ENCODE measurements at regions of chr14 and their contacts with region 1.

Region 1: DNA sequence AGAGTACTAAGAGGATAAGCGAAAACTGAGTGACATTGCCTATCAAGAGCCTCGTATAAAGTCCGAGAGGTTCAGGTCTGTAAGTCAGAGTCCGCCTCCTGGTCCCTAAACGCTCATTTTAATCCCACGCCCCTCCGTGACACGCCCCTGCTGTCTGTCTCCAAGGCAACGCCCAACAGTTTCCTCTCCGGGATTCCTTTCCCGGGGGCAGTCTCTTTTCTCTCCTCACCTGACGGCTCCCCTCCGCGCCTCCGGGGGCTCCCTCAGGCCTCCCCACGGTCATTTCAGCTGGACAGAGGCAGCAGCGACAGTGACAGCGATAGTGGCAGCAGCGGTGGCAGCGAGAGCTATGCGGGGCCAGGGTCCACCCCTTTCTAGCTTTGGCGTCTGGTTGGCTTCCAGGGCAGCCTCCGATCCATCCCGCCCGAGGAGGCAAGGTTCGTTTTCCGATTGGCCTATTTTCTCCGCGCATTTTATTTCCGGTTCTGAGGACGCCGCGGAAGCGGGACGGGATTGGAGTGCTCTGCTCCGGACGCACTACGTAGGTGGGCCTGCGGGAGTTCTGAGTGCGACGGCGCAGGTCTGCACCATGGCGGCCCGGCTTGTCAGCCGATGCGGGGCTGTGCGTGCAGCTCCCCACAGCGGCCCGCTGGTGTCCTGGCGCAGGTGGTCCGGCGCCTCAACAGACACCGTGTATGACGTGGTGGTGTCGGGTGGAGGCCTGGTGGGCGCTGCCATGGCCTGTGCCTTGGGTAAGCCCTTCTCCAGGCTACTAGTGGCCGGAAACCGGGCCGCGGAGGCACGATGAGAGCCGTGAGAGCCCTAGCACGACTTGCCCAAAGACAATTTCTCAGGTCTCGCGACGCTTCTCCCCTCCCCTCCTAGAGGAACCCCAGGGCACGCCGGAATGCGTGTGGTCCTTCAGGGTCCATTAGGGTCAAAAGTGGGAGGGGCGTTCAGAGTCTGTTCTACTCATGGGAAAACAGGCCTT is at the starts of genes COQ6 and FAM161B:
- DNase-seq: peak; percentile 95
- H3K4me3 Mint-ChIP-seq: peak within 1 kb of the TSS; percentile 98
- H3K27ac Mint-ChIP-seq: peak within 1 kb of the TSS; percentile 90
- H3K4me1 Mint-ChIP-seq: peaks cover 21% of the 10 kb centered on the region
- H3K27me3 Mint-ChIP-seq: no peaks in the 10 kb centered on the region
- total RNA-seq, gene COQ6: 17.6 to 17.7 TPM
- total RNA-seq, gene FAM161B: 1.5 to 1.6 TPM

Region 2: GRCh38 chr14:73136387-73137225 is 813.4 kb before region 1 on chr14 and contains the start of gene PSEN1:
- CTCF ChIA-PET with region 1: no interaction called
- intact Hi-C with region 1: loop called (anchors 2 kb)
- DNase-seq: peak; percentile 98
- H3K4me3 Mint-ChIP-seq: peak within 1 kb of the TSS; percentile 98
- H3K27ac Mint-ChIP-seq: peak within 1 kb of the TSS; percentile 97
- H3K4me1 Mint-ChIP-seq: peaks cover 26% of the 10 kb centered on the region
- H3K27me3 Mint-ChIP-seq: no peaks in the 10 kb centered on the region
- total RNA-seq, gene PSEN1: 24.5 to 26.0 TPM

Region 3: DNA sequence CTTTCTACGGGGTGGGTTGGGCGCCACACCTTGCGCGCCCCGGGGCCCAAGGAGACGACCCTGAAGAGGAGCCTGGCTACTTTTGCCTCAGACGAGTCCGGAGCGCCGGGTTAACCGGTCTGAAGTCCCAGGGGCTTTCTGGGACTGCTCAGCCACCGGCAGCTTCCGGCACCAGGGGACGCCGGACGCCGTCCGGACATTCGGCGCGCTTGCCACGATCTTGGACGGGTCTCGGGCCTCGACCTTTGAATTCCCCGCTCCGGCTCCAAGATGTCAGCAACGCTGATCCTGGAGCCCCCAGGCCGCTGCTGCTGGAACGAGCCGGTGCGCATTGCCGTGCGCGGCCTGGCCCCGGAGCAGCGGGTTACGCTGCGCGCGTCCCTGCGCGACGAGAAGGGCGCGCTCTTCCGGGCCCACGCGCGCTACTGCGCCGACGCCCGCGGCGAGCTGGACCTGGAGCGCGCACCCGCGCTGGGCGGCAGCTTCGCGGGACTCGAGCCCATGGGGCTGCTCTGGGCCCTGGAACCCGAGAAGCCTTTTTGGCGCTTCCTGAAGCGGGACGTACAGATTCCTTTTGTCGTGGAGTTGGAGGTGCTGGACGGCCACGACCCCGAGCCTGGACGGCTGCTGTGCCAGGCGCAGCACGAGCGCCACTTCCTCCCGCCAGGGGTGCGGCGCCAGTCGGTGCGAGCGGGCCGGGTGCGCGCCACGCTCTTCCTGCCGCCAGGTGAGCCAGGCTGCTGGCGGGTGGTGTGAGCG is 358.2 kb before region 1 on chr14 and contains the start of gene ACOT4:
- CTCF ChIA-PET with region 1: no interaction called
- intact Hi-C with region 1: no loop called
- DNase-seq: peak; percentile 42
- H3K4me3 Mint-ChIP-seq: peak within 1 kb of the TSS; percentile 68
- H3K27ac Mint-ChIP-seq: no peak within 1 kb of the TSS
- H3K4me1 Mint-ChIP-seq: peaks cover 7% of the 10 kb centered on the region
- H3K27me3 Mint-ChIP-seq: no peaks in the 10 kb centered on the region
- total RNA-seq, gene ACOT4: 1.4 to 1.7 TPM

Region 4: DNA sequence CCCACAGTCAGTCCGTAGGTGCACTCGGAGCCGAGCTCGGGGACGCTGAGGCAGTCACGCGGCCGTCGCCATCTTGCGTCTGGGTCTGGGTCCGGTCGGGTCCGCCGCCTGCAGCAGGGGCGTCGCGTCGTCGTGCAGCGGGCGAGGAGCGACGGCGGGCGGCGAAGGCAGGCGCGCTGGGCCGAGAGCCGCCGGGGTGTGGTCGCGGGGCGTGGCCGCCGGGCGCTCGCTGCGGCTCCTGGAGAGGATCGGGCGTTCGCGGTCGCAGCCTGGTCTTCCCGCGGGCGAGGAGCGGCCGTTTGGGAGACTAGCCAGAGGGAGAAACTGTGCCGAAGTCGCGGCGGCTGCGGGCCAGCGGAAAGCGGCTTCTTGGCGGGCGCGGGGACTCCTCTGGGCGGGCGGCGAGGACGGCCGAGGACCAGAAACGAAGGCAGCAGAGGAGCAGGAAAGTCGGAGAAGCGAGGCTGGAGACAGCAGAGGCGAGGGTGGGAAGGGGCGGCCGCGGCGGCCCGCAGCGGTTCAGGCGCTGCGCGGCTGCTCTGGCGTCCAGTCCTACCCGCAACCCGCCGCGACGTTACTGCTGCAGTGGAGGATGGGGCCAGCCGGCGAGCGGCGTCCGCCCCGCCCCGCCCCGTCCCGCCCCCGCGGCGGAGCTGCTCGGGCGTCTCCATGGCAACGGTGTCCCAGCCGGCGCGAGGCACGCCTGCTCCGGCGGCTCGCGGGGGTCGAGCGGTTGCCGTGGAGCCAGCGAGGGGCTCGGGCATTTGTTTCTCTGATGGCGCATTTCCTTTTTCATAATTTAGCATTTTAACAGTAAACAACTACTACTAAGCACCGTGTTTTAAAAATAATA is 236.0 kb before region 1 on chr14 and contains the start of gene PNMA1:
- CTCF ChIA-PET with region 1: no interaction called
- intact Hi-C with region 1: loop called (anchors 1 kb)
- DNase-seq: peak; percentile 84
- H3K4me3 Mint-ChIP-seq: peak within 1 kb of the TSS; percentile 99
- H3K27ac Mint-ChIP-seq: peak within 1 kb of the TSS; percentile 85
- H3K4me1 Mint-ChIP-seq: peaks cover 13% of the 10 kb centered on the region
- H3K27me3 Mint-ChIP-seq: no peaks in the 10 kb centered on the region
- total RNA-seq, gene PNMA1: 18.5 to 19.2 TPM

Region 5: DNA sequence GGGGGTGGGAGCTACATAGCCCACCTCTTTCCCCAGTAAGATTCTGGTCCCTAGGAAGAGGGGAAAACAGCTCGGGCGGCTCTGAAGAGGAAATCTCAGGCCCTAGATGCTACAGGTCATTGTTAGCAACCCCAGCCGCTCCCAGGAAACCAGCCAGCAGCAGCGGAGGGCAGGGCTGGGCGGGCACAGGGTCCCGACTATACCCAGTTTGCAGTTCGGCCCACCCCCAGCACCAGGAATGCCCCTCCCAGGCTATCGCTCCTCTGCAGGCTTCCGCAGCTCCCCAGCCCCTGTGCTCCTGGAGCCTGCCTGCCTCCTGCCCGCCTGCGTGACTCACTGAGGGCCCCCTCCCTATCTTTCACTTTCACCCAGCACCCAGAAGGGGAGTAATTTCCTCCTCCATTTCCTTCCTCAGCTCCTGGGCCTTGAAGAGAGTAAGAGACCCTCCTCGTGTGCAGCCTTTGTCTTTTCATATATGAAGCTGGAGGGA is 208.6 kb before region 1 on chr14:
- CTCF ChIA-PET with region 1: no interaction called
- intact Hi-C with region 1: loop called (anchors 5 kb)
- DNase-seq: peak; percentile 88
- H3K4me3 Mint-ChIP-seq: peak overlapping the region; percentile 43
- H3K27ac Mint-ChIP-seq: peak overlapping the region; percentile 84
- H3K4me1 Mint-ChIP-seq: peaks cover 63% of the 10 kb centered on the region
- H3K27me3 Mint-ChIP-seq: no peaks in the 10 kb centered on the region

Region 6: GRCh38 chr14:73851644-73852382 is 98.2 kb before region 1 on chr14 and contains the start of gene PTGR2:
- CTCF ChIA-PET with region 1: no interaction called
- intact Hi-C with region 1: loop called (anchors 1 kb)
- DNase-seq: peak; percentile 91
- H3K4me3 Mint-ChIP-seq: peak within 1 kb of the TSS; percentile 92
- H3K27ac Mint-ChIP-seq: peak within 1 kb of the TSS; percentile 96
- H3K4me1 Mint-ChIP-seq: peaks cover 20% of the 10 kb centered on the region
- H3K27me3 Mint-ChIP-seq: no peaks in the 10 kb centered on the region
- total RNA-seq, gene PTGR2: 10.7 to 14.1 TPM

Region 7: GRCh38 chr14:73924337-73924736 is 25.7 kb before region 1 on chr14:
- CTCF ChIA-PET with region 1: no interaction called
- intact Hi-C with region 1: no loop called
- DNase-seq: no peak
- H3K4me3 Mint-ChIP-seq: no peak overlapping the region
- H3K27ac Mint-ChIP-seq: peak overlapping the region; percentile 38
- H3K4me1 Mint-ChIP-seq: no peaks in the 10 kb centered on the region
- H3K27me3 Mint-ChIP-seq: no peaks in the 10 kb centered on the region

Region 8: DNA sequence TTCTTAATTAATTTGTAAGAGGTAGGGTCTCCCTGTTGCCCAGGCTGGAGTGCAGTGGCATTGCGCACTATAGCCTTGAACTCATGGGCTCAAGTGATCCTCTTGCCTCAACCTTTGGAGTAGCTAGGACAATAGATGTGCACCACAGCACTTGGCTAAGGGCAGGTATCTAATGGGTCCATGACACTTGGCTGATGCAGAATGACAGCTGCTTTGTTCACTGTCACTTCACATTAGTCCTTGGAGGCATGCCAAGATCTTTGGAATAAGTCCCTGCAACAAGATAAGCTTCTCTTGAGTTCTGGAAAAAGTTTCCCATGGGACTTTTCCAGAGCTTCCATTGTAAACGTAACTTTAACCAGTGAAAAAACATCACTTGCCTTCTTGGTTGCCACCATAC is 23.5 kb after region 1 on chr14:
- CTCF ChIA-PET with region 1: no interaction called
- intact Hi-C with region 1: no loop called
- DNase-seq: no peak
- H3K4me3 Mint-ChIP-seq: no peak overlapping the region
- H3K27ac Mint-ChIP-seq: no peak overlapping the region
- H3K4me1 Mint-ChIP-seq: no peaks in the 10 kb centered on the region
- H3K27me3 Mint-ChIP-seq: no peaks in the 10 kb centered on the region

Region 9: DNA sequence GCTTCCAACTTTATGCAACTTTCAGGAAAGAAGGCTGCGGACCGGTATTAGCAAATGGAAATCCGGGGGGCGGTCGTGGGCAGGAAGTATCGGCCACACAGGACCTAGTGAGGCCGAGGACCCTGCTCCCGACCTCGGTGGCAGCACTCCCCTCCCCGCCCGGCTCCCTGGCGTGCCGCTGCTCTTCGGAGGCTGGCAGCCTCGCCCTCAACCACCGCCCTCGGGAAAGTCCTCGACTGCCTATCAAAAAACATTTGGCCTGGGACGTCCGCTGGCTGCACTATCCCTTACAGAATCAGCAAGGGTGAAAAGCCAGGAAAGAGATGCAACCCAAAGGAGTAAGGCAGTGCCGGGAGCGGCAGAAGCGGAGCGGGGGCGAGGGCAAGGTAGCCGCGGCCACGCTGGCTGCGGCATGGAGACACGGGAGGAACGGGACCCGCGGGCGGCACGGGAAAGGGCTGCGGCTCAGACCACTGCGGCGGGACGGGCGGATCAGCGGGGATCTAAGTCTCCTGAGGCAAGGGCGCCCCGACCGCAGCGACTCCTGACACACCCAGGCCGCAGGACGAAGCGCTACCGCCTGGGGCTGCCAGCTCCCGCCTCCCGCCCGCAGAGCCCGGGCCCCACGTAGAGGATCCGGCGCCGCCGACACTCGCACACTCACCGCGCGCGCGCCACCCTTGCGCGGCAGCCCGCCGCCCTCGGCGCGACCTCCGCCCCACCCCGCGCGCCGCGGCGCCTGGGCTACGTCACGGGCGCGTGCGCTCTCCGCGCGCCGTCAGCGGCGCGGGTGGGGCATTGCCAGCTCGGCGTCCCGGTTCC is 68.8 kb after region 1 on chr14 and contains the starts of genes BBOF1 and ENTPD5:
- CTCF ChIA-PET with region 1: no interaction called
- intact Hi-C with region 1: loop called (anchors 1 kb)
- DNase-seq: peak; percentile 80
- H3K4me3 Mint-ChIP-seq: peak within 1 kb of the TSS; percentile 86
- H3K27ac Mint-ChIP-seq: peak within 1 kb of the TSS; percentile 90
- H3K4me1 Mint-ChIP-seq: peaks cover 13% of the 10 kb centered on the region
- H3K27me3 Mint-ChIP-seq: no peaks in the 10 kb centered on the region
- total RNA-seq, gene BBOF1: 1.3 to 1.7 TPM
- total RNA-seq, gene ENTPD5: 7.3 to 9.6 TPM

Region 10: GRCh38 chr14:74084277-74085046 is 134.4 kb after region 1 on chr14 and contains the starts of genes ALDH6A1 and LIN52:
- CTCF ChIA-PET with region 1: no interaction called
- intact Hi-C with region 1: loop called (anchors 1 kb)
- DNase-seq: peak; percentile 100
- H3K4me3 Mint-ChIP-seq: peak within 1 kb of the TSS; percentile 99
- H3K27ac Mint-ChIP-seq: peak within 1 kb of the TSS; percentile 95
- H3K4me1 Mint-ChIP-seq: peaks cover 38% of the 10 kb centered on the region
- H3K27me3 Mint-ChIP-seq: no peaks in the 10 kb centered on the region
- total RNA-seq, gene ALDH6A1: 24.0 to 25.3 TPM
- total RNA-seq, gene LIN52: 10.7 to 13.6 TPM

Measured in activated naive CD4-positive, alpha-beta T cell treated with anti-CD3 and anti-CD28 coated beads for 36 hours (primary cell).